Caco-2 (cell line): ENCODE measurements at regions of chr12 and their contacts with region 1.

Region 1: DNA sequence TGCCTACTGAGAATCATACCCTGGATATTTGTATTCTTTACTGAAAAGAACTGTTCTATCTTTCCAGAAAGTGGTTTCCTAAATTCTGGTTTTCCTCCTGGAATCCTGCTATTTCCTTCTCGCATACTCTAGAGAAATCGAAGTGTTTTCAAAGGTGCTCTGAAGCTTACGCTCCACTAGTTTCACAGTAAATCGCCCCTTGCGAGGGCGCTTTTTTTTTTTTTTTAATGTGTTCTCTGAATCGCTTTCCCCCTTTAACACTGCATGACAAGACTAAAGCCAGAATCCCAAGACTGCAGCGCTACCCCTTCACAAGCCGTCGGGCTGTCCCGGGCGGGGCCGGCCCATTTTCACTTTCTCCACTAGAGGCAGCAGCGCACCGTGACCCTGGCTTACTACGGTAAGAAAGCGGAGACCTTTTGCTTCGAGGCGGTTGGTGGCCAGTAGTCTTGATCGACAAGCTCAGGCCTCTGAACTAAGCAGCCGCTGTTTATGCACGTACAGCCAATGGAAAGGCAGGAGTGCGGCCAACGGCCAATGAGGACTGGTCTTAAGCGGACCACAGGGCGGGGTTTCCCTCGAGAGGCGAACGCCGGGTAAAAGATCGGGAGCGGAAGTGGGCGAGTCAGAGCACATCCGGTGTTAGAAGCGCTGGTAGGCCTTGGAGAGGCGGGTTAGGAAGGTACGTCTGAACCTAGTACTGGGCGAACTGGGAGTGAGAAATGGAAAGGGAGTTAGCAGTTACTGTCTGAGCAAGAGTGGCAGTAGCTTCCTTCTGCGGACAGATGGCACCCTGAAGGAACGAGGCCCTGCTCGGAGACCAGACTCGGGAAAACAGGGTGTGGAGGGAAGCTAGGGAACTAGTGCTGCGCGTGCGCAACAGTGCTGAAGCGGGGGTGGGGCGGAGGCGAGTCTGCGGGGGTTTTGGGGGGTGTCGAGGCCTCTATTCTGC is at the start of gene TMBIM6:
- DNase-seq: peak; percentile 100
- H3K4me3 ChIP-seq: peak within 1 kb of the TSS; percentile 67
- H3K4me3 Mint-ChIP-seq: peak within 1 kb of the TSS; percentile 87
- H3K27ac Mint-ChIP-seq: peak within 1 kb of the TSS; percentile 96
- H3K4me1 ChIP-seq: peaks cover 16% of the 10 kb centered on the region
- H3K4me1 Mint-ChIP-seq: peaks cover 21% of the 10 kb centered on the region
- H3K27me3 ChIP-seq: no peaks in the 10 kb centered on the region
- H3K27me3 Mint-ChIP-seq: no peaks in the 10 kb centered on the region
- CTCF ChIP-seq: peak; percentile 96 to 99
- total RNA-seq, gene TMBIM6: 826 and 867 TPM in 2 replicates

Region 2: DNA sequence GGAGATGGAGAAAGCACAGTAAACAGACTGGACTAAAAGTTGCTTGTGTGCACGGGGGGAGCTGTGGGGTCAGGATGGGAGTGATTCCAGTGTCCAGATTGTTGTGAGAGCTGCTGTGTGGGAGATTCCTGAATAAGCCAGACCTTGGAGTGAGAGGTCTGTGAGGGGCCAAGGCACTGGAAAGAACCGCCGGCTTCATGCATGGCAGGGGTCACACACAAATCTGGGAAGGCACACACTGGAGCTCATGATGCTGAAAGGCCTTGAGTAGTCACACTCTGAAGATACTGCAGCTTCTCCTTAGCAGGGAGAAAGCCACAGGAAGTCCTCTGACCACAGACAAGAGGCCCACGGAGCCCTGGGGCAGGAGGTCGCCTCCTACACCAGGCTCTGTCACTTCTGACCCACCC is 975.4 kb before region 1 on chr12:
- CTCF ChIA-PET with region 1: no interaction called
- POLR2A ChIA-PET with region 1: no interaction called
- intact Hi-C with region 1: no loop called
- DNase-seq: no peak
- H3K4me3 ChIP-seq: no peak overlapping the region
- H3K4me3 Mint-ChIP-seq: no peak overlapping the region
- H3K27ac Mint-ChIP-seq: no peak overlapping the region
- H3K4me1 ChIP-seq: 0 out of 2 replicates have a peak, but pooled peaks cover 3% of the 10 kb centered on the region
- H3K4me1 Mint-ChIP-seq: no peaks in the 10 kb centered on the region
- H3K27me3 ChIP-seq: no peaks in the 10 kb centered on the region
- H3K27me3 Mint-ChIP-seq: no peaks in the 10 kb centered on the region
- CTCF ChIP-seq: no peak

Region 3: GRCh38 chr12:49623142-49623904 is 117.9 kb before region 1 on chr12 and contains the start of gene PRPF40B:
- CTCF ChIA-PET with region 1: interaction called, 9 read pairs
- POLR2A ChIA-PET with region 1: interaction called, 13 read pairs
- intact Hi-C with region 1: no loop called
- DNase-seq: peak; percentile 95 to 99
- H3K4me3 ChIP-seq: peak within 1 kb of the TSS; percentile 66
- H3K4me3 Mint-ChIP-seq: peak within 1 kb of the TSS; percentile 82
- H3K27ac Mint-ChIP-seq: peak within 1 kb of the TSS; percentile 77
- H3K4me1 ChIP-seq: peaks cover 32% of the 10 kb centered on the region
- H3K4me1 Mint-ChIP-seq: peaks cover 29% of the 10 kb centered on the region
- H3K27me3 ChIP-seq: no peaks in the 10 kb centered on the region
- H3K27me3 Mint-ChIP-seq: no peaks in the 10 kb centered on the region
- CTCF ChIP-seq: peak; percentile 61 to 71
- total RNA-seq, gene PRPF40B: 33.3 and 33.4 TPM in 2 replicates

Region 4: GRCh38 chr12:49683599-49684309 is 57.5 kb before region 1 on chr12:
- CTCF ChIA-PET with region 1: interaction called, 11 read pairs
- POLR2A ChIA-PET with region 1: interaction called, 4 read pairs
- intact Hi-C with region 1: no loop called
- DNase-seq: no peak
- H3K4me3 ChIP-seq: no peak overlapping the region
- H3K4me3 Mint-ChIP-seq: no peak overlapping the region
- H3K27ac Mint-ChIP-seq: no peak overlapping the region
- H3K4me1 ChIP-seq: peaks cover 30% of the 10 kb centered on the region
- H3K4me1 Mint-ChIP-seq: peaks cover 16% of the 10 kb centered on the region
- H3K27me3 ChIP-seq: no peaks in the 10 kb centered on the region
- H3K27me3 Mint-ChIP-seq: no peaks in the 10 kb centered on the region
- CTCF ChIP-seq: no peak

Region 5: GRCh38 chr12:49720214-49720613 is 21.0 kb before region 1 on chr12:
- CTCF ChIA-PET with region 1: interaction called, 7 read pairs
- POLR2A ChIA-PET with region 1: interaction called, 12 read pairs
- intact Hi-C with region 1: no loop called
- DNase-seq: no peak
- H3K4me3 ChIP-seq: no peak overlapping the region
- H3K4me3 Mint-ChIP-seq: no peak overlapping the region
- H3K27ac Mint-ChIP-seq: no peak overlapping the region
- H3K4me1 ChIP-seq: no peaks in the 10 kb centered on the region; the same call in 1 of the 2 replicates
- H3K4me1 Mint-ChIP-seq: no peaks in the 10 kb centered on the region
- H3K27me3 ChIP-seq: no peaks in the 10 kb centered on the region
- H3K27me3 Mint-ChIP-seq: peaks cover 13% of the 10 kb centered on the region
- CTCF ChIP-seq: peak in 1 of 2 experiments; percentile 33

Region 6: GRCh38 chr12:49763006-49763591 is 21.9 kb after region 1 on chr12:
- CTCF ChIA-PET with region 1: interaction called, 22 read pairs
- POLR2A ChIA-PET with region 1: interaction called, 12 read pairs
- intact Hi-C with region 1: loop called (anchors 1 kb)
- DNase-seq: peak; percentile 65 to 82
- H3K4me3 ChIP-seq: no peak overlapping the region
- H3K4me3 Mint-ChIP-seq: no peak overlapping the region
- H3K27ac Mint-ChIP-seq: no peak overlapping the region
- H3K4me1 ChIP-seq: no peaks in the 10 kb centered on the region
- H3K4me1 Mint-ChIP-seq: no peaks in the 10 kb centered on the region
- H3K27me3 ChIP-seq: no peaks in the 10 kb centered on the region
- H3K27me3 Mint-ChIP-seq: no peaks in the 10 kb centered on the region
- CTCF ChIP-seq: peak; percentile 83 to 84

Region 7: GRCh38 chr12:49828133-49829091 is 87.2 kb after region 1 on chr12 and contains the start of gene NCKAP5L:
- CTCF ChIA-PET with region 1: interaction called, 8 read pairs
- POLR2A ChIA-PET with region 1: interaction called, 13 read pairs
- intact Hi-C with region 1: no loop called
- DNase-seq: peak; percentile 97
- H3K4me3 ChIP-seq: peak within 1 kb of the TSS; percentile 85
- H3K4me3 Mint-ChIP-seq: peak within 1 kb of the TSS; percentile 78
- H3K27ac Mint-ChIP-seq: peak within 1 kb of the TSS; percentile 74
- H3K4me1 ChIP-seq: peaks cover 6% of the 10 kb centered on the region; the same call in 1 of the 2 replicates
- H3K4me1 Mint-ChIP-seq: peaks cover 17% of the 10 kb centered on the region
- H3K27me3 ChIP-seq: no peaks in the 10 kb centered on the region
- H3K27me3 Mint-ChIP-seq: no peaks in the 10 kb centered on the region
- CTCF ChIP-seq: no peak
- total RNA-seq, gene NCKAP5L: 17.8 and 19.5 TPM in 2 replicates

Region 8: DNA sequence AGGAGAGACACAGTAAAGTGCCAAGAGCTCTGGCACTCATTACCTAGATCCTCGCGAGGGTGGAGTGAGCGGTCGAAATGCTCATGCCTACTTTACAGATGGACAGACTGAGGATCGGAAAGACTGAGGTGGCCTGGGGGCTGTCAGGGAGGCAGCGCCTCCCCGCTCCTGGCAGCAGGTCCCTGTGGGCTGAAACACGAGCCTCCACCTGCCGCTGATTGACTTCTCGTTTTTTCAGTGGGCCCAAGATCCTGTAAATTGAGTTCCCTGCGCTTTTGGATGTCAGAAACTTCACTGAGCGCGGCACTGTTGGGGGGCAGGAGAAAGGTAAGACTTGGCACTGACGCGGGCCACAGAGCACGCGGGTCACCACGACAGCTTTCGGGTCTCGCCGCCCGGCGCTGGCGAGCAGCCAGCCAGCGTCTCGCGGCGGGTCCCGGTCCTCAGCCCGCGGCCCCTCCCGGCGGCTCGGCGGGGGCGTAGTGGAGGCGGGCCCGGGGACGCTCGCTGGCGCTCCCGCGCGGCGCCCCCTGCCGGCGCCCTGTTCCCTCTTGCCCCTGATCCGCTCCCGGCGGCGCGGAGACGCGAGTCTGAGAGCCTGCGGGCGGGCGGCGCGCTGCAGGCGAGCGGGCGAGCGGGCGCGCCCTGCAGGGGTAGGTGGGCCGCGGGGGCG is 1849.3 kb after region 1 on chr12:
- CTCF ChIA-PET with region 1: no interaction called
- POLR2A ChIA-PET with region 1: interaction called, 10 read pairs
- intact Hi-C with region 1: no loop called
- DNase-seq: peak; percentile 87 to 97
- H3K4me3 ChIP-seq: peak overlapping the region; percentile 92
- H3K4me3 Mint-ChIP-seq: peak overlapping the region; percentile 90
- H3K27ac Mint-ChIP-seq: peak overlapping the region; percentile 60
- H3K4me1 ChIP-seq: 0 out of 2 replicates have a peak, but pooled peaks cover 7% of the 10 kb centered on the region
- H3K4me1 Mint-ChIP-seq: peaks cover 10% of the 10 kb centered on the region
- H3K27me3 ChIP-seq: no peaks in the 10 kb centered on the region
- H3K27me3 Mint-ChIP-seq: no peaks in the 10 kb centered on the region
- CTCF ChIP-seq: peak; percentile 61 to 63